Breast epithelium (tissue), 4 donors: ENCODE measurements at regions of chr14 and their contacts with region 1.

Region 1: GRCh38 chr14:34231626-34232025 is 230.4 kb downstream of the SPTSSA start:
- DNase-seq: peak in 1 of 2 donors; percentile 23
- H3K4me3 ChIP-seq: no peak overlapping the region
- H3K27ac ChIP-seq: no peak overlapping the region
- H3K4me1 ChIP-seq: no peaks in the 10 kb centered on the region
- H3K27me3 ChIP-seq: no peaks in the 10 kb centered on the region
- CTCF ChIP-seq: no peak
- POLR2A ChIP-seq: no peak

Region 2: DNA sequence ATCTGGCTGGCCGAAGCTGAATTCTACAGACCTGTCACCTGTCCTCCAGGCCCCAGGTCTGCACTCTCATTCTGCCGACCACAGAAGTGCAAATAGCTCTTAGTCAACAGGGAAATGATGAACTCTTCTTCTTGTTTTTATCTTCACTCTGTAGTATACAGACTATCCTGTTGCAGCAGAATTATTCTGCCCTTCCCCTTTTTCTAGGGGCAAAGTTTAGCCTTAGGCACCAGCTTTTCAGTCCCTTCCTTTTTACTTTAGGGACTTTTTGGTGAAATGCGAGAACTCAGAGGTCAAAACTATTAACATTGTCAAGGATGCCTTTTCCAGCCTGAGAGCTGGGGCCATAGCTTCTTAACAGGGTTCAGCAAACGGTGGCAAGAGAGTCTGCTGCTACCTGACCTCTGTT is 51.2 kb before region 1 on chr14:
- intact Hi-C with region 1: no loop called
- DNase-seq: peak in 1 of 2 donors; percentile 60
- H3K4me3 ChIP-seq: no peak overlapping the region
- H3K27ac ChIP-seq: peak overlapping the region in 1 of 2 donors; percentile 15
- H3K4me1 ChIP-seq: no peaks in the 10 kb centered on the region
- H3K27me3 ChIP-seq: no peaks in the 10 kb centered on the region
- CTCF ChIP-seq: no peak
- POLR2A ChIP-seq: no peak

Region 3: DNA sequence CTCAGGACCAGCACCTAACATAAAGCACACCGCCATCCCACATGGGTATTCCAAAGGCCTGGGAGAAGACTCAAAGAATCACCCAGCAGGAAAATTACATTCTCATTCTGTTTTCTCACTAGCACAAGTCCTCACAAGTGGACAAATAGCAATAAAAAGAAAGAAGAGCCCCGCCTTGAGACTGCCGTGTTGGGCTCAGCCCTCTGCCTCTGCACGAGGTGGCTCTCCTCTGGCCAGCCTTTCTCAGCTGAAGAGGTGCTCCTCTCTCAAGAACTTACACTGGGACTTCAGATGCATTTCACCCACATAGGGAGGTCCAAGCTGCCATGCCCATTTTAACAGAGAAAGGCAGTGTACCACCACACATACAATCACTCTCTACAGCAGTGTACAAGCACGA is 23.0 kb after region 1 on chr14:
- intact Hi-C with region 1: loop called (anchors 2 kb)
- DNase-seq: no peak
- H3K4me3 ChIP-seq: no peak overlapping the region
- H3K27ac ChIP-seq: no peak overlapping the region
- H3K4me1 ChIP-seq: no peaks in the 10 kb centered on the region
- H3K27me3 ChIP-seq: no peaks in the 10 kb centered on the region
- CTCF ChIP-seq: no peak
- POLR2A ChIP-seq: no peak